ENCODE measurements at regions of chr7 and their contacts with region 1.

Region 1: GRCh38 chr7:16062269-16062668 is 359.1 kb downstream of the CRPPA start:
- DNase-seq: no peak
- ATAC-seq: peak; percentile 44 to 82

Region 2: GRCh38 chr7:15686295-15686956 is 375.8 kb before region 1 on chr7 and contains the start of gene MEOX2:
- intact Hi-C with region 1: loop called (anchors 5 to 10 kb)
- DNase-seq: peak; percentile 85
- ATAC-seq: peak; percentile 94 to 96
- total RNA-seq, gene MEOX2: 6.3 to 12.9 TPM

Region 3: GRCh38 chr7:15709978-15710377 is 352.3 kb before region 1 on chr7:
- intact Hi-C with region 1: loop called in 1 of 2 experiments (anchors 10 kb)
- DNase-seq: no peak
- ATAC-seq: no peak

Region 4: GRCh38 chr7:15720849-15721471 is 341.3 kb before region 1 on chr7:
- intact Hi-C with region 1: loop called (anchors 10 kb)
- DNase-seq: peak; percentile 23
- ATAC-seq: no peak

Region 5: DNA sequence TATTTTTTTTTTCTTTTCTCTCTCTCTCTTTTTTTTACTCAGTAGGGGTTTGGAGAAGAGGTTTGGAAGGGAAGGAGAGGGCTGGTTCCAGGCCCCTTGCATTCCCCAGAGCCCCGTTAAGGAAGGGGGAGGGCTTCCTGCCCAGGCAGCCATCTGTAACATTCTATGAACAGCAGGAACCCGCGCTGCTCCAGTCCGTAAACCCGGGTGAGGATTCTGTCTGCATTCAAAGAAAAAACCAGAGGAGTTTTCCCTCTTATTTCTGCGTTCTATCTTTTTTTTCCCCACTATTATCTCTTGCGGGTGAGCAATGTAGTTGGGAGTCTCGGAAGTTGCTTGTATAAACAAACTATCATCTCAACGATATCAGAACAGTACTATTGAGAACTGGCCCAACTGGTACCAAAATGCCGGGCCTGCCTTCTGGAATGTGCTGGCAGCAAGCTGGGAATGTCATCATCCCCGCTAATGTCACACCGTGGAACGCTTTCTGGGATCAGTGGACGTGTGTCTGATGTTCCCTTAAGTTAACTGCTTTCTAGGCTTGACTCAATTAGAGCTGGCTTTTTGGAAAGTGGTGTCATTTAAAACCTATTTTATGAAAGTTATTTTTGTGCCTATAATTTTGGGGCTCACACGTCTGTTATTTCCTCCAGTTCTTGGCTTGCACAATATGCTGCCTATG is 222.7 kb before region 1 on chr7:
- intact Hi-C with region 1: loop called in 1 of 2 experiments (anchors 10 kb)
- DNase-seq: peak; percentile 68
- ATAC-seq: peak; percentile 97 to 98

Measured in left cardiac atrium (tissue), 4 donors.